ENCODE measurements at regions of chr11 and their contacts with region 1.

Region 1: GRCh38 chr11:130448416-130449309 is at the start of gene ADAMTS15:
- DNase-seq: peak; percentile 63
- H3K4me3 ChIP-seq: peak within 1 kb of the TSS; percentile 30 to 41
- H3K27ac ChIP-seq: peak within 1 kb of the TSS; percentile 23 to 55
- H3K4me1 ChIP-seq: peaks cover 6% of the 10 kb centered on the region
- H3K27me3 ChIP-seq: no peaks in the 10 kb centered on the region
- CTCF ChIP-seq: peak in 1 of 4 experiments; percentile 4
- POLR2A ChIP-seq: peak; percentile 30
- total RNA-seq, gene ADAMTS15: 0.59 to 1.5 TPM

Region 2: DNA sequence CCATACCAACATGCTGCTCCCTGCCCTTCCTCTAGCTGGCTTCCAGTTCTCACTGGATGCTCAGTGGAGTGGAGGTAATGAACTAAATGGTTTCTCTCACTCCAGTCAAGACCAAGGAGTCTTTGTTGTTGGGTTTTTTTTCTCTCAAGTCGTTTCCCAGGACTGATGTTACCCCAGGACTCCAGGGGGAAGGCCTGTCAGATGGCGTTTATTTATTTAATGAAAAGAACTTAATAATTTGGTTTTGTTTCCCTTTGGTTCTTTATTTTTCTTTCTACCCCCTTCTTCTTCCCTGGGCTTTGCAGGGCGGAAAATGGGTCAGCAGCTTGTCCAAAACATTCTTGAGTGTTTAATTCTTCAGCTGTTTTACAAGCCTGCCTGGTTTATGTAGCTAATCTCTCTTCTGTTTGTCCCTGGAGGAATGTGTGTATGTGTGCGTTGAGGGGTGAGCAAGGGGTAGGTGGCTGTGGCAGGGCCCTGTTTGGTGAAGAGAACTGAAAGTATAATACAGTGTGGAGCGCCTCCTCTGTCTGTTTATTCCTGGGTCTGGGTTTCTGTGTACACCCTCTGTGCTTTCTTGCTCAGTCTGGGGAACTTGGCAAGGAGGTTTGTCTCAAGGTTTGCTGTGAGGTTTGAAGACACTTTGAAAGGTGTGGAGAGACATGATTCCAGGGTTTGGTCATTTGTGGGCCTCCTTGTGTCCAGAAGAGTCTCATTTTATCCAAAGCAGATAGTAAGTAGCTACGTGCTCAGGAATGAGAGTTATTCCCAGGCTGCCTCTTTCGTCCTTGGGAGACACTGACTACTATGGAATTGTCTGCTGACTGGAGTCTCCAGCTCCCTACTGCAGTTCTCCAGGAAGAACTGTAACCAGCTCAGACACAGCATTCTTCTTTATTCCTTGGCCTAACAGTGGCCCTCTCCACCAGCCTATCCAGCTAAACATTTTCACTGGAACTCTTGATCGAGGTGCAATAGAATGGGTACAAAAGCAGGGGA is 175.3 kb after region 1 on chr11:
- intact Hi-C with region 1: loop called (anchors 5 kb)
- DNase-seq: no peak
- H3K4me3 ChIP-seq: no peak overlapping the region
- H3K27ac ChIP-seq: no peak overlapping the region
- H3K4me1 ChIP-seq: no peaks in the 10 kb centered on the region
- H3K27me3 ChIP-seq: no peaks in the 10 kb centered on the region
- CTCF ChIP-seq: peak in 1 of 4 experiments; percentile 17
- POLR2A ChIP-seq: no peak